ENCODE measurements at regions of chr11 and their contacts with region 1.

Region 1: DNA sequence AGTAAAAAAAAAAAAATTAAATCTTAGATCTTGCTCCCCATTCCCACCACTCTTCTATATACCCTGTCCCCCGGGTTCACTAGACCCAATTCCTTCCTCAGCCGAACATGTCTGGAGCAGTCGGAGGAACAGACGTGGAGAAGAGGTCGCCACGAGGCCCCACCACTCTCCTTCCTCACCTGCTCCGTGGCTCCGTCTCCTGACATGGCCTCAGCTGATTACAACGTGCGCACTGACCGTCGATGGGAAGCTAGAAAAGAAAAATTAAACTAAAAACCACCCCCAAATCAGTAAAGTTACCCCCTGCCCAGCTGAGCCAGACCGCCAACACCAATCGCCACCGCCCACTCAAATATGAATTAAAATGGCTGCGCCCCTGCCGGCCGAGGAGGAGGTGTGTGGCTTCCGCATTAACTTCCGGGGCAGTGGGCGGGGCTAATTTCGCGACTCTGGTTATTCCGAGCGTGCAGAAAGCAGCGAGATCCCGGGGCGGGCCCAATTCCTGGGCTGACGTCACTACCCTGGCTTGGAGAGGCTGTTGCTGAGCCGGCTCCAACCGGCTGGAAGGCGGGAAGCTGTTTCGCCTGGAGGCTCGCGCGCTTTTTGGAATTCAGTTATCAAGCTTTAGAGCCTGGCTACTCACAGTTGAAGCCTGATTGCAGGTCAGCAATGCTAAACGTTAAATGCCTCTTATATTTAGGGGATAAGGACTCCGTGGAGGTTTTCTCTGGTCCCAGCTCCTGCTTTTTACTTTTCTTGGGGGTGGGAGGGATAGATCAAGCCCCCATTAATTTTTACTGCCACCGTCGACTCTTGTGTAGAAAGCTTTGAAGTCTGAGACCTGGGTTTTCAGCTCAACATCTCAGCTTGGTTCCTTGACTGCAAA is at the start of gene CSTF3:
- DNase-seq: peak; percentile 99
- H3K4me3 Mint-ChIP-seq: peak within 1 kb of the TSS; percentile 88
- H3K27ac Mint-ChIP-seq: peak within 1 kb of the TSS; percentile 97
- H3K4me1 Mint-ChIP-seq: peaks cover 22% of the 10 kb centered on the region
- H3K27me3 Mint-ChIP-seq: no peaks in the 10 kb centered on the region
- CTCF ChIP-seq: peak; percentile 9
- total RNA-seq, gene CSTF3: 37.5 and 48.4 TPM in 2 replicates

Region 2: DNA sequence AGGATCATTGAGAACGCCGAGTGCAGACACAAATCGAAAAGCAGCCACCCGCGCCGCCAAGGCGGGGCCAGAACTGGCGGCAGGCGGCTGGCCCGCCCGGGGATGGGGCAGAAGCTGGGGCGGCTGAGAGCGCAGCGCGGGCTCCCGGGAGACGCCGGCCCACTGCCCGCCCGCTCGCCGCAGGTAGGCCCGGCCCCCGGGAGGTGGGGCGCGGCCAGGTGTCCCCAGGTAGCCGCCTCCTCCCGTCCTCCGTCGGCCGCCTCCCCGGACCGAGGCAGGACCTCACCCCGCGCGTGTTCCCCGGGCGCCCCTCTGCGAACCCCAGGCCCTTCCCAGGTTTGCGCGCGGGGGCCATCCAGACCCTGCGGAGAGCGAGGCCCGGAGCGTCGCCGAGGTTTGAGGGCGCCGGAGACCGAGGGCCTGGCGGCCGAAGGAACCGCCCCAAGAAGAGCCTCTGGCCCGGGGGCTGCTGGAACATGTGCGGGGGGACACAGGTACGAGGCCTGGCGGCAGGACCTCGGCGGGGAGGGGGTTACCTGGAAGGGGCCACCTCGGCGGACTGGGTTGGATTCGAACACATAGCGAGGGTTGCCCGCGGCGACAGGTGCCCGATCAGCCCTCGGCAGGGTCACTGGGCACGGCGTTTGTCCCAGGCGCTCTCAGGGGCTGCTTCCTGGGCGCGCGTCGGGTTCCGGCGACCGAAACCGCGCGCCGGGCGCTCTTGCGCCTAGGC is 331.5 kb before region 1 on chr11 and contains the start of gene PRRG4:
- CTCF ChIA-PET with region 1: no interaction called
- POLR2A ChIA-PET with region 1: no interaction called
- intact Hi-C with region 1: no loop called
- DNase-seq: peak; percentile 77
- H3K4me3 Mint-ChIP-seq: peak within 1 kb of the TSS; percentile 81
- H3K27ac Mint-ChIP-seq: peak within 1 kb of the TSS; percentile 81
- H3K4me1 Mint-ChIP-seq: no peaks in the 10 kb centered on the region
- H3K27me3 Mint-ChIP-seq: no peaks in the 10 kb centered on the region
- CTCF ChIP-seq: no peak
- total RNA-seq, gene PRRG4: 1.1 and 1.2 TPM in 2 replicates

Region 3: GRCh38 chr11:33135216-33135615 is 26.1 kb before region 1 on chr11:
- CTCF ChIA-PET with region 1: no interaction called
- POLR2A ChIA-PET with region 1: interaction called, 15 read pairs
- intact Hi-C with region 1: no loop called
- DNase-seq: no peak
- H3K4me3 Mint-ChIP-seq: no peak overlapping the region
- H3K27ac Mint-ChIP-seq: no peak overlapping the region
- H3K4me1 Mint-ChIP-seq: no peaks in the 10 kb centered on the region
- H3K27me3 Mint-ChIP-seq: no peaks in the 10 kb centered on the region
- CTCF ChIP-seq: no peak

Region 4: GRCh38 chr11:33257897-33258630 is 96.7 kb after region 1 on chr11:
- CTCF ChIA-PET with region 1: interaction called, 20 read pairs
- POLR2A ChIA-PET with region 1: interaction called, 123 read pairs
- intact Hi-C with region 1: loop called (anchors 1 kb)
- DNase-seq: peak; percentile 92
- H3K4me3 Mint-ChIP-seq: peak overlapping the region; percentile 90
- H3K27ac Mint-ChIP-seq: peak overlapping the region; percentile 95
- H3K4me1 Mint-ChIP-seq: peaks cover 28% of the 10 kb centered on the region
- H3K27me3 Mint-ChIP-seq: no peaks in the 10 kb centered on the region
- CTCF ChIP-seq: no peak

Region 5: GRCh38 chr11:33324302-33324985 is 163.1 kb after region 1 on chr11:
- CTCF ChIA-PET with region 1: interaction called, 146 read pairs
- POLR2A ChIA-PET with region 1: interaction called, 6 read pairs
- intact Hi-C with region 1: loop called (anchors 1 kb)
- DNase-seq: no peak
- H3K4me3 Mint-ChIP-seq: no peak overlapping the region
- H3K27ac Mint-ChIP-seq: peak overlapping the region; percentile 43
- H3K4me1 Mint-ChIP-seq: peaks cover 21% of the 10 kb centered on the region
- H3K27me3 Mint-ChIP-seq: no peaks in the 10 kb centered on the region
- CTCF ChIP-seq: no peak

Region 6: DNA sequence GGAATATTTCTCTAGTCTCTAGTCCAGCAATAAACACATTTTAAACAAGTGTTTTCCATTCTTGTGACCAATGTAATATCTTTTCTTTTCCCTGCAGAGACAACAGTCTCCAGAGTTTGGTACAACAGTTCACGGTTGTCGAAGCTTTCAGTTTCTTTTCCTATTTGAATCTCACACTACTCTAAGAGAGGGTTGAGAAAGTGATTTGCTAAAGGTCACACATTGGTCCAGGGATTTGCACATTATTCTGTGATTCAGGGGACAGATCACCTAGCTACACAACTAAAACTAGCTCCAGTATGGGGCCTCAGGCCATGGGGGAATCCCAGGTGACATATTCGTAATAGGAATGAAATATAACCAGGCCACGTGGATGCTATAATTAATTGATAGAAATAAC is 228.3 kb after region 1 on chr11:
- CTCF ChIA-PET with region 1: no interaction called
- POLR2A ChIA-PET with region 1: no interaction called
- intact Hi-C with region 1: no loop called
- DNase-seq: no peak
- H3K4me3 Mint-ChIP-seq: no peak overlapping the region
- H3K27ac Mint-ChIP-seq: no peak overlapping the region
- H3K4me1 Mint-ChIP-seq: no peaks in the 10 kb centered on the region
- H3K27me3 Mint-ChIP-seq: peaks cover 8% of the 10 kb centered on the region
- CTCF ChIP-seq: no peak

Region 7: GRCh38 chr11:33682446-33682845 is 521.1 kb after region 1 on chr11:
- CTCF ChIA-PET with region 1: interaction called, 14 read pairs
- POLR2A ChIA-PET with region 1: no interaction called
- intact Hi-C with region 1: no loop called
- DNase-seq: peak; percentile 48
- H3K4me3 Mint-ChIP-seq: no peak overlapping the region
- H3K27ac Mint-ChIP-seq: no peak overlapping the region
- H3K4me1 Mint-ChIP-seq: no peaks in the 10 kb centered on the region
- H3K27me3 Mint-ChIP-seq: peaks cover 12% of the 10 kb centered on the region
- CTCF ChIP-seq: peak; percentile 25